ENCODE measurements at regions of chr21 and their contacts with region 1.

Region 1: DNA sequence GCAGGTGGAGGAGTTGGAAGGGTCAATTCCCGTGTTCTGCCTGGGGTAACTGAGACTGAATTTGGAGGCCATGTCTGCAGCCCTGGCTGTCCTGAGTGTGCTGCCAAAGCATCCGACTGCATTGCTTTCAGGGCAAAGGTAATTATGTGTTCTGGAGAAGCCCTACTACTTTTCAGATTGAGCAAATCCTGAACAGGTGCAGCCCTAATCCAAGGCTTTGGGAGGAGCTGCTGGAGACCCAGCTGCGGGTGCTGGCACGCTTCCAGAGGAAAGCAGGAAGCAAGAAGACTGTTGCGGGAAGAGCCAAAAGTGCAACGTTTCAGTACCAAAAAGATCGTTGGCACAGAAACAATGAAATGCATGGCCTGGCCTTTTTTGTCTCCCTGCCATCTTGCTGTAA is 73.7 kb upstream of the NRIP1 start:
- DNase-seq: peak in 3 of 10 donors; percentile 12 to 77 (median 66)

Region 2: DNA sequence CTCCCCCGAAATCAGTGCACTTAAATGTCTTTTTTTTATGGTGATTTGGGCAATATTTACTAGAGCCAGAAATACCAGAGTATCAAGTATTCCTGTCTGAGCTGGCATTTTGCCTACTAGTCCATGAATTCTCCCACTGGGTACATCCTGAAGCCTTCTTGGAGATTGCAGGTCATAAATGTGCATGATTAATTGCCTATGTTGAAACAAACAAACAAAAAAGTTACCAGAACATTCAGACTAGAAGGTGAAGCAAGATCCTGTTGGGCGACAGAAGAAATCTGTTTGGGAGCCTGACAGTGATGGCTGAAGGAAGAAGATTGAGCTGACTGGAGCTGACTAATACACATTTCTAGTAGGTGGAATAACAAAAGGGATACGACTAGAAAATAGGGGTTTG is 53.8 kb after region 1 on chr21:
- intact Hi-C with region 1: loop called (anchors 10 kb)
- DNase-seq: no peak